Natural killer cell (primary cell): ENCODE measurements at regions of chr19 and their contacts with region 1.

Region 1: DNA sequence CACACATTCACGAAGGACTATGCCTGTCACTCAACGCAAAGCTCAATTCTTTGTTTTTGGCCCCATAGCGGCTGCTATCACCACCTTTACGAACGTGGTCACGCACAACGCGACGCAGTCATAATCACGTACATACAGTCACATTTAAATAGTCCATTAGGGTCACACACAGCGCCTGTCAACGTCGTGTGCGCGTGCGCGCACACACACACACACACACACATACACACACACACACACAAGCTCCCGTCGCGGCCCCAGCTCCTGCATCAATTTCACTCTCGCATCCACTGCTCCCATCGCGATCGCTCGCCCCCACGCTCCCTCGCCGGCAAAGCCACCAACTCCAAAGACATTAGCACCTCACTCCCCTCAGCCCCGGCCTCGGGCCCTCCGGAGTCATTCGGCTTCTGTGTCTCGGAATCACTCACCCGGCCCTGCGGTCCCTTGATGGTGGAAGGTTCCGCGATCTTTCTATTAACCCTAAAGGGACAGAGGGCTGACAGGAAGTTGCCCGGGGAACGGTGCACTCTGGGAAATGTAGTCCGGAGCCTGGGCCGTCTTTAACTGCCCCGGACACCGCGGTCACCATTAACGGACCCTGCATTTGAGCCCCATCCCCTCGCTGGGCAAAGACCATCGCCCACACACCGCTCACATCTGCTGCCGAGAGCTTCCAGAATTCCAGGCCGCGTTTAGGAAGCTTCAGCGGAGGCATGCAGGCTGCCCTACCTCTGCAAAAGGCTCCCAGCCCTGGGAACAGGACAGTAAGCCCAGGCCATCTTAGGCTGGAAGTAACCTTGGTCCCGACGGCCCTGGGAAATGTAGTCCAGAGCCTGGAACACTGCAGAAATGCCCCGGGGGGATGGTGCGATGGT is at the start of gene ZNF790:
- DNase-seq: peak; percentile 83 to 91
- ATAC-seq: peak; percentile 91 to 97 (median 94)
- H3K4me3 ChIP-seq: peak within 1 kb of the TSS; percentile 80
- H3K4me3 Mint-ChIP-seq: no peak within 1 kb of the TSS
- H3K27ac ChIP-seq: peak within 1 kb of the TSS; percentile 94
- H3K27ac Mint-ChIP-seq: no peak within 1 kb of the TSS
- H3K4me1 ChIP-seq: peaks cover 14% of the 10 kb centered on the region
- H3K4me1 Mint-ChIP-seq: peaks cover 0 to 6% of the 10 kb centered on the region in 2 donors
- H3K27me3 ChIP-seq: no peaks in the 10 kb centered on the region
- H3K27me3 Mint-ChIP-seq: no peaks in the 10 kb centered on the region
- CTCF ChIP-seq: no peak
- total RNA-seq, gene ZNF790: 2.6 to 6.8 (median 5.0) TPM

Region 2: GRCh38 chr19:36797786-36798108 is 40.4 kb before region 1 on chr19:
- intact Hi-C with region 1: loop called (anchors 1 kb)
- DNase-seq: no peak
- ATAC-seq: no peak
- H3K4me3 ChIP-seq: peak overlapping the region; percentile 96
- H3K4me3 Mint-ChIP-seq: peak overlapping the region; percentile 99
- H3K27ac ChIP-seq: peak overlapping the region; percentile 90
- H3K27ac Mint-ChIP-seq: peak overlapping the region; percentile 95 to 99
- H3K4me1 ChIP-seq: peaks cover 17% of the 10 kb centered on the region
- H3K4me1 Mint-ChIP-seq: peaks cover 3 to 7% of the 10 kb centered on the region in 2 donors
- H3K27me3 ChIP-seq: no peaks in the 10 kb centered on the region
- H3K27me3 Mint-ChIP-seq: no peaks in the 10 kb centered on the region
- CTCF ChIP-seq: no peak

Region 3: DNA sequence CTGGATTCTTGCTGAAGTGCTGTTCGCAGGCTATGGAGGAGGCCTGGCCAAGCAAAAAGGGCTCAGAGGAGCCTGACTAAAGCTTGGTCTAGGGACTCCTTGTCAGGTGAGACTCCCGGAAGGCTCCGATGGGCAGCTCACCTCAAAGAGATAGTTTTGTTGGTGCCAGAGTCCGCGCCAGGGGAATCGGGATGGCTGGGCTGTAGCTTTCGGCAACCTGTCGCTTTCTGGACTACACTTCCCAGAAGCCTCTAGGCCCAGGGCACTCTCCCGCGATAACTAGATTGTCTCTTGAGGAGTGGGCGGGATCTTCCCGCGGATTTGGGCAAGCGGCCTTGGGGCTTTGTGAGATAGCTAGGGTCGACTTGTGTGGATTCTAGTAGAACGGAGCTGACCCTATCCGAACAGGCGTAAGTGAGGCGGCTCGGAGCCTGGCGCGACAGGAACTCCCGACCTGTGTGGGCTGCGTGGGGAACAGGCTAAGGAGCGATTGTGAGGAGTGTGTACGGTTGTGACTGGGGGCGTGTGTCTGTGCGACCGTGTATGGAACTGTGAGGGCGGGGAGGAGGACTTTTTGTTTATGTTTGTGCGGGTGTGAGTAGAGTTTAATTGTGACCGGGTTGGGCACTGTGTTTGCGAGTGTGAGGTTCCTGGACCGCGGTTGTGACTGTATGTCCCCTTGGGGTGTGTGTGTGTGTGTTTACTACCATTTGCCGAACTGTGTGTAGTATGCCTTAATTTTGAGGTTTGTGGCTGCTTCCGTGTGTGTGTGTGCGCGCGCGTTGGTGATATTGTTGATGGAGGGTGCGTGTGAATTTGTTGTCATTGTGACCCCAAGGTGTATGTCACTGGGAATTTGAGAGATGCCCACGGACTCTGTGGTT is 12.7 kb after region 1 on chr19 and contains the start of gene ZNF345:
- intact Hi-C with region 1: loop called (anchors 1 kb)
- DNase-seq: peak; percentile 73 to 94
- ATAC-seq: peak; percentile 79 to 94 (median 85)
- H3K4me3 ChIP-seq: peak within 1 kb of the TSS; percentile 62
- H3K4me3 Mint-ChIP-seq: no peak within 1 kb of the TSS
- H3K27ac ChIP-seq: peak within 1 kb of the TSS; percentile 85
- H3K27ac Mint-ChIP-seq: no peak within 1 kb of the TSS
- H3K4me1 ChIP-seq: peaks cover 23% of the 10 kb centered on the region
- H3K4me1 Mint-ChIP-seq: peaks cover 0 to 10% of the 10 kb centered on the region in 2 donors
- H3K27me3 ChIP-seq: no peaks in the 10 kb centered on the region
- H3K27me3 Mint-ChIP-seq: no peaks in the 10 kb centered on the region
- CTCF ChIP-seq: no peak
- total RNA-seq, gene ZNF345: 7.1 to 19.5 (median 10.0) TPM